HepG2 (cell line): ENCODE measurements at regions of chr3 and their contacts with region 1.

Region 1: GRCh38 chr3:147361454-147362420 is 44.6 kb downstream of the ZIC4 start:
- DNase-seq: peak; percentile 23
- ATAC-seq: peak; percentile 91
- H3K4me3 ChIP-seq: no peak overlapping the region
- H3K27ac ChIP-seq: no peak overlapping the region
- H3K4me1 ChIP-seq: no peaks in the 10 kb centered on the region
- H3K27me3 ChIP-seq: peaks cover 3 to 35% of the 10 kb centered on the region in 2 experiments; a peak in 3 of 5 replicates
- CTCF ChIP-seq: peak; percentile 77
- EP300 ChIP-seq: no peak
- POLR2A ChIP-seq: no peak
- RAD21 ChIP-seq: no peak

Region 2: GRCh38 chr3:146156095-146156494 is 1205.6 kb before region 1 on chr3:
- CTCF ChIA-PET with region 1: no interaction called
- POLR2A ChIA-PET with region 1: no interaction called
- in situ Hi-C with region 1: no loop called
- intact Hi-C with region 1: loop called (anchors 10 kb)
- DNase-seq: no peak
- ATAC-seq: no peak
- H3K4me3 ChIP-seq: peak overlapping the region; percentile 94 to 96 (median 94)
- H3K27ac ChIP-seq: peak overlapping the region; percentile 53
- H3K4me1 ChIP-seq: peaks cover 69% of the 10 kb centered on the region
- H3K27me3 ChIP-seq: no peaks in the 10 kb centered on the region; a peak in 1 of 5 replicates
- CTCF ChIP-seq: no peak
- EP300 ChIP-seq: no peak
- POLR2A ChIP-seq: no peak
- RAD21 ChIP-seq: no peak

Region 3: GRCh38 chr3:147341727-147342126 is 20.0 kb before region 1 on chr3:
- CTCF ChIA-PET with region 1: no interaction called
- POLR2A ChIA-PET with region 1: no interaction called
- in situ Hi-C with region 1: no loop called
- intact Hi-C with region 1: no loop called
- DNase-seq: no peak
- ATAC-seq: no peak
- H3K4me3 ChIP-seq: no peak overlapping the region
- H3K27ac ChIP-seq: no peak overlapping the region
- H3K4me1 ChIP-seq: no peaks in the 10 kb centered on the region
- H3K27me3 ChIP-seq: no peaks in the 10 kb centered on the region
- CTCF ChIP-seq: no peak
- EP300 ChIP-seq: no peak
- POLR2A ChIP-seq: no peak
- RAD21 ChIP-seq: no peak

Region 4: GRCh38 chr3:147431751-147432150 is 70.0 kb after region 1 on chr3:
- CTCF ChIA-PET with region 1: no interaction called
- POLR2A ChIA-PET with region 1: no interaction called
- in situ Hi-C with region 1: no loop called
- intact Hi-C with region 1: no loop called
- DNase-seq: no peak
- ATAC-seq: no peak
- H3K4me3 ChIP-seq: no peak overlapping the region
- H3K27ac ChIP-seq: no peak overlapping the region
- H3K4me1 ChIP-seq: no peaks in the 10 kb centered on the region
- H3K27me3 ChIP-seq: peaks cover 0 to 1% of the 10 kb centered on the region in 2 experiments; a peak in 2 of 5 replicates
- CTCF ChIP-seq: no peak
- EP300 ChIP-seq: no peak
- POLR2A ChIP-seq: no peak
- RAD21 ChIP-seq: no peak

Region 5: DNA sequence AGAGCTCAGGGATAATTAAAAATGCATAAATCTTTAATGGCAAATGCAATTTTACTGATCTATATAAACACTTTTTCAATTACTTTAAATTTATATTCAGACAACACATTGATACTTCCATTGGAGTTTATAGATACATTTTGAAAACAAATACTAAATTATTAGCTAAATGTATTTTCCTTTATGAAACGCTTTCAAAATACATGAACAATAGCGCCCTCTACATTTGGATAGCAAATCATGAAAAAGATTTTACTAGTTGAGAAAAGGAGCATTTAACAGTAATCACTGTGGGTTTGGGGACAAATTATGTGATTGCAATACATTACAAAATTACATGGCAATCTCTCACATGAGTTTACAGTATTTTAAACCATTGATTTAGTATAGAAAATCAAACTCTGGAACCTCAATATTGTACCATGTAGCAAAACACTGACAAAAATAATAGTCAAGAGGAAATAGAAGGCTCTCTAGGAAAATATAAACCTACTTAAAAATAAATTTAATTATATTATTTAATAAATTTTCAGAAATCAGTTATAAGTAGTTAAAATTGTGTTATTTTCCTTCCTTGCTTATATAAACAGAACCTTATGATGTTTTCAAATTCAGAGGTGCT is 255.4 kb after region 1 on chr3:
- CTCF ChIA-PET with region 1: no interaction called
- POLR2A ChIA-PET with region 1: no interaction called
- in situ Hi-C with region 1: no loop called
- intact Hi-C with region 1: loop called (anchors 10 kb)
- DNase-seq: peak; percentile 18
- ATAC-seq: no peak
- H3K4me3 ChIP-seq: no peak overlapping the region
- H3K27ac ChIP-seq: no peak overlapping the region
- H3K4me1 ChIP-seq: no peaks in the 10 kb centered on the region
- H3K27me3 ChIP-seq: no peaks in the 10 kb centered on the region
- CTCF ChIP-seq: peak; percentile 35
- EP300 ChIP-seq: no peak
- POLR2A ChIP-seq: no peak
- RAD21 ChIP-seq: no peak